ENCODE measurements at regions of chr19 and their contacts with region 1.

Region 1: DNA sequence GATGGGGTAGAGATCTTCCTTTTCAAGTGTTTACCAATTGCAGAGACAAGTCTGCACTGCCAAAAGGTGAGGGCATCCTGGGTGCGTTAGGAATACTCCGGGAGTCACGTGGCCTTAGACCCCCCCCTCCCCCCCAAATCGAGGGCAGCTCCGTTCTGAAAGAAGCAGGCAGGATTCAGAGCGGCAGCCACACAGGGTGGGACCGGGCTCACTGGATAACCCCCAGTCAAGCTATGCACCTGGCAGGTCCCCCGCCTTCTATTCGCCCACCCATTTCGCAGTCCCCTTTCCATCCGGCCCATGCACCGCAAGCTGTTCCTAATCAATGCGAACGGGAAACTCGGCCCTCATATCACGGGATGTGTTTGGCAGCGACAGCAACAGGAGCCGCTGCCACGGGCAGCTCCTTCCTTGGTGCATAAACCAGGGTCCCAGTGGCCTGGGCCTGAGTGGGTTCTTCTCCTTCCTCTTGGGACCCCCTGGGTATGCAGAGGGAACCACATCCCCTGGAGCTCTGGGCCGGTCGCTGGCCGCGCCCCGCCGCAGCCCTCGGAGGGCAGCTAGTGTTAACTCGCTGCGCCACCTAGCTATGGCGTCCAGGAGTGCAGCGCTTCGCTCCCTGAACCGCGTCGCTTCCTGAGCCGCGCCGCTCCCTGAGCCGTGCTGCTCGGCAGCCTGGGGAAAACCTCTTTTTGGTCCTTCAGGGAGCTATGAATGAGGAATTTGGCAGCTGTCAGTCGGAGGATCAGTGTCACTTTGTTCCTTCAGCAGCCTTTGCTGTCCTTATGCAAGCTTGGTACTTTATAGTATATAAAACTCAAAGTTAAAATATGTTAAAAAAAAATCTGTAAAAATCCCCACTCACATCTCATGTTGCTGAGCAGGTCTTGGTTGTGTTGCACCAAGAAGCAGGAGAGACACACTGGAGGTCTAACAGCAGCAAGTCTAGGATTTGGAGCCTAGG is 41.4 kb downstream of the LYL1 start:
- DNase-seq: peak; percentile 87

Region 2: GRCh38 chr19:12913011-12913561 is 148.2 kb before region 1 on chr19:
- in situ Hi-C with region 1: loop called (anchors 25 kb)
- DNase-seq: peak; percentile 98

Region 3: GRCh38 chr19:12994701-12995595 is 66.3 kb before region 1 on chr19 and contains the start of gene NFIX:
- in situ Hi-C with region 1: no loop called
- DNase-seq: peak; percentile 29
- total RNA-seq, gene NFIX: 0.86 and 3.6 TPM in 2 replicates

Region 4: DNA sequence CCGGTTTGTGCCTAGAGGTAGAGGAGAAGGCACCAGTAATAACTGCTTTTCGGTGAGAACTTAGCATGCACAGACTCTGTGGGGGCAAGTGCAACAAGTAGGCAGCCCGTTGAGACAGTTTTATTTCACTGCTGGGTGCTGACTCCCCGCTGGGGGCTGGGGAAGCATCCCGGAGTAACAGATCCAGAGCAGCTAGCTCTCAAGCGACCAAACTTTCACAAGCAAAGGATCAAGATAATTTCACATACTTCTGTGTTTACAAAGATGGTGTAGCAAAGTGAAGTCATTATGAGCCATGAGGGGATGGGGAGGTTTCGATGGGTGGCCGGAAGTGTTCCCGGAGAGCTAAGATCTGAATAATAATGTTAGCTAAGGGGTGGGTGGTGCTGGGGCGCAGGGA is 59.6 kb after region 1 on chr19:
- in situ Hi-C with region 1: no loop called
- DNase-seq: no peak